Activated CD4-positive, alpha-beta T cell treated with anti-CD3 and anti-CD28 coated beads for 36 hours (primary cell): ENCODE measurements at regions of chr1 and their contacts with region 1.

Region 1: GRCh38 chr1:107529502-107530149 is 388.8 kb downstream of the NTNG1 start:
- DNase-seq: peak; percentile 20
- ATAC-seq: peak; percentile 51
- H3K4me3 Mint-ChIP-seq: no peak overlapping the region
- H3K27ac Mint-ChIP-seq: no peak overlapping the region
- H3K4me1 Mint-ChIP-seq: no peaks in the 10 kb centered on the region
- H3K27me3 Mint-ChIP-seq: peaks cover 5% of the 10 kb centered on the region

Region 2: GRCh38 chr1:107196973-107197562 is 332.6 kb before region 1 on chr1:
- CTCF ChIA-PET with region 1: no interaction called
- POLR2A ChIA-PET with region 1: no interaction called
- intact Hi-C with region 1: loop called in 1 of 2 experiments (anchors 5 kb)
- DNase-seq: peak; percentile 46
- ATAC-seq: no peak
- H3K4me3 Mint-ChIP-seq: no peak overlapping the region
- H3K27ac Mint-ChIP-seq: no peak overlapping the region
- H3K4me1 Mint-ChIP-seq: no peaks in the 10 kb centered on the region
- H3K27me3 Mint-ChIP-seq: peaks cover 3% of the 10 kb centered on the region

Region 3: DNA sequence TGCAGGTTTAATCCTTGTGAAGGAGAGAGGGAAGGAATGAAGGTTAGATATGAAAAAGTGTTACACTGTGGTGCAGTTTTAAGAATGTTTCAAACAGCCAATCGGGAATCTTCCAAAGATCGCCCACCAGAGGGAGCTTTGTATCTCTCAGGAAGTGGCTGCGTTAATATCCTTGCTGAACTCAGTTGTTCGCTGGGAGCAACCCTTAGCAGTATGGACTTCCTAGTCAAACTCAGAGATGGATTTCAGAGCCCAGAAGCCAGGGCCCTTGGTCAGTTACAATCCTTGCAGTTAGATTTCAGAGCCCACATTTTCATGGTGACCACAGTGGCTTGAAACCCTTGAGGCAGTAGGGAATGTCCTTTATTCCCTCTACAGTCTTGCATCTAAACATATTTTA is 252.6 kb before region 1 on chr1:
- CTCF ChIA-PET with region 1: interaction called, 3 read pairs
- POLR2A ChIA-PET with region 1: no interaction called
- intact Hi-C with region 1: loop called in 1 of 2 experiments (anchors 5 kb)
- DNase-seq: peak; percentile 11
- ATAC-seq: no peak
- H3K4me3 Mint-ChIP-seq: no peak overlapping the region
- H3K27ac Mint-ChIP-seq: no peak overlapping the region
- H3K4me1 Mint-ChIP-seq: peaks cover 6% of the 10 kb centered on the region
- H3K27me3 Mint-ChIP-seq: peaks cover 3% of the 10 kb centered on the region

Region 4: DNA sequence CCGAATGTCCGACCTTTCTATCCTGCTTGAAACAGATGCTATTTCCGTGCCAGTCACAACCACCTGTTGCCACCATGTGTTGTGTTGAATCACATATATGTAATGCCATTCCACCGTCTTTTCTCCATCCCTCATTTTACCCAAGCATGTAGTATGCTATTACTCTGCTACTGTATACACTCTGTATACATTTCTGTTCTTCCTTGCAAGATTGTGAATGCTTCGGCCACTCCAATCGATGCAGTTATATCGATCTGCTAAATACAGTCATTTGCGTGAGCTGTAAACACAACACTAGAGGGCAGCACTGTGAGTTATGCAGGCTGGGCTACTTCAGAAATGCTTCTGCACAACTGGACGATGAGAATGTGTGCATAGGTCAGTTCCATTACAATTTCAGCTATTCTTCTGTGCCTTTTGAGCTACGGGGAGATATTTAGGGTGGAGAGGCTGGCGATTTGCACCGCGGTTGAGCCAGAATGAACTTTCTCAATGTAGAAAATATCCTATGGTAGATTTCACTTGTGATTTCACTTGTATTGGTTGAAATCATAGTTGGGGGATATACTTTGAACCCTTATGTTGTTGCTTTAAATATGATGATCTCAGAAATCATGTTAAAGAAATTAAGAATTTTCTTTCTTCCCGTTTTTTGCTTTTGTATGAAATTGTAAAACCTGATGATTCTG is 98.9 kb before region 1 on chr1:
- CTCF ChIA-PET with region 1: interaction called, 16 read pairs
- POLR2A ChIA-PET with region 1: no interaction called
- intact Hi-C with region 1: loop called (anchors 1 to 5 kb)
- DNase-seq: peak; percentile 48
- ATAC-seq: no peak
- H3K4me3 Mint-ChIP-seq: no peak overlapping the region
- H3K27ac Mint-ChIP-seq: no peak overlapping the region
- H3K4me1 Mint-ChIP-seq: no peaks in the 10 kb centered on the region
- H3K27me3 Mint-ChIP-seq: peaks cover 5% of the 10 kb centered on the region